ENCODE measurements at regions of chr9 and their contacts with region 1.

Region 1: GRCh38 chr9:109320742-109321448 is at the start of gene EPB41L4B:
- DNase-seq: peak; percentile 81
- ATAC-seq: peak; percentile 96
- H3K4me3 Mint-ChIP-seq: peak within 1 kb of the TSS; percentile 83
- H3K27ac Mint-ChIP-seq: no peak within 1 kb of the TSS
- H3K4me1 Mint-ChIP-seq: peaks cover 19% of the 10 kb centered on the region
- H3K27me3 Mint-ChIP-seq: peaks cover 57% of the 10 kb centered on the region
- CTCF ChIP-seq: peak; percentile 60
- total RNA-seq, gene EPB41L4B: 5.3 and 6.1 TPM in 2 replicates

Region 2: GRCh38 chr9:107489687-107490605 is 1830.9 kb before region 1 on chr9 and contains the start of gene KLF4:
- CTCF ChIA-PET with region 1: no interaction called
- POLR2A ChIA-PET with region 1: no interaction called
- intact Hi-C with region 1: loop called (anchors 10 kb)
- DNase-seq: peak; percentile 68
- ATAC-seq: peak; percentile 73
- H3K4me3 Mint-ChIP-seq: peak within 1 kb of the TSS; percentile 78
- H3K27ac Mint-ChIP-seq: no peak within 1 kb of the TSS
- H3K4me1 Mint-ChIP-seq: peaks cover 28% of the 10 kb centered on the region
- H3K27me3 Mint-ChIP-seq: peaks cover 46% of the 10 kb centered on the region
- CTCF ChIP-seq: no peak
- total RNA-seq, gene KLF4: 1.0 TPM in 2 replicates

Region 3: GRCh38 chr9:109119439-109120203 is 201.3 kb before region 1 on chr9 and contains the start of gene TMEM245:
- CTCF ChIA-PET with region 1: no interaction called
- POLR2A ChIA-PET with region 1: no interaction called
- intact Hi-C with region 1: loop called (anchors 2 kb)
- DNase-seq: peak; percentile 86
- ATAC-seq: peak; percentile 95
- H3K4me3 Mint-ChIP-seq: peak within 1 kb of the TSS; percentile 88
- H3K27ac Mint-ChIP-seq: peak within 1 kb of the TSS; percentile 82
- H3K4me1 Mint-ChIP-seq: peaks cover 36% of the 10 kb centered on the region
- H3K27me3 Mint-ChIP-seq: no peaks in the 10 kb centered on the region
- CTCF ChIP-seq: no peak
- total RNA-seq, gene TMEM245: 16.1 and 20.6 TPM in 2 replicates

Region 4: GRCh38 chr9:109232449-109233237 is 88.3 kb before region 1 on chr9:
- CTCF ChIA-PET with region 1: no interaction called
- POLR2A ChIA-PET with region 1: no interaction called
- intact Hi-C with region 1: no loop called
- DNase-seq: no peak
- ATAC-seq: no peak
- H3K4me3 Mint-ChIP-seq: no peak overlapping the region
- H3K27ac Mint-ChIP-seq: no peak overlapping the region
- H3K4me1 Mint-ChIP-seq: no peaks in the 10 kb centered on the region
- H3K27me3 Mint-ChIP-seq: peaks cover 17% of the 10 kb centered on the region
- CTCF ChIP-seq: no peak

Region 5: GRCh38 chr9:109244157-109245132 is 76.5 kb before region 1 on chr9:
- CTCF ChIA-PET with region 1: no interaction called
- POLR2A ChIA-PET with region 1: no interaction called
- intact Hi-C with region 1: loop called (anchors 1 kb)
- DNase-seq: peak; percentile 42
- ATAC-seq: peak; percentile 88
- H3K4me3 Mint-ChIP-seq: no peak overlapping the region
- H3K27ac Mint-ChIP-seq: no peak overlapping the region
- H3K4me1 Mint-ChIP-seq: peaks cover 4% of the 10 kb centered on the region
- H3K27me3 Mint-ChIP-seq: peaks cover 13% of the 10 kb centered on the region
- CTCF ChIP-seq: peak; percentile 48